Activated CD4-positive, alpha-beta memory T cell treated with anti-CD3 and anti-CD28 coated beads, Interleukin-2, amount 10 ng/mL, durations not matched to agents 7 days and 5 days (primary cell): ENCODE measurements at regions of chr14 and their contacts with region 1.

Region 1: DNA sequence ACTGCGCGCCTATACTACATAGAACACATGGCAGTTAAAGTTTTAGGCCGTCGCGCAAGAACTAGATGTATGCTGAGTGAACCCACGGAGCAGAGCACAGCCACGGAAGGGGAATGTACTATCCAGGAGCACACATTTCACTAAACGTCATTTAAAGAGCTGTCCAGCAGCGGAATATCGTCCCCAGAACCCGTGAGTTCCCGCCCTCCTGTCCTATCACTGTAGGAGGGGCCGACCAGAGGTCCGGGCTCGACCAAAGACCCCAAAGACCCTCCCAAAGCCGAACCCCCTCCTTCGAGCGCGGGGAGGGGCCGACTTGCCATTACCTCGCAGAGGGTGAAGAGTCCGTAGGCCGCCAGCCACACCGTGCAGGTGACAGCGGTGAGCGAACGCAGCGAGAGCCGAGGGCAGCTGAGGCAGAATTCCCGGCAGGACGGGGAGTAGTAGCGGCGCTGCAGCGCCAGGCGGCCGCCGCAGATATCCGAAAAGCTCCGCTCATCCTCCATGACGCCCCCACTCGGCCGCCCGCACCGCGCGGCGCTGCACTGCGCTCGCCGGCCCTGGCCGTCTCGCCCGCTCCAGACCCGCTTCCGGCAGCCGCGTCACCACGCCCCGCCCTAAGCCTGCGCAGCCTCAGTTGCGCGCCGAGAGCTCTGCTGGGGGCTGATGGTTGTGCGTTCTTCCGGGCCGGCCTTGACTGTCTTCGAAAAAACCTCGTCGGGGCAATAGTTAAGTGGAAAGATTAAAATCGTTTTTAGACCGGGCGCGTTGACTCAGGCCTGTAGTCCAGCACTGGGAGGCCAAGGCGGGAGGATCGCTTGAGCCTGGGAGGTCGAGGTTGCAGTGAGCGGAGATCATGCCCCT is at the start of gene PIGH:
- DNase-seq: peak; percentile 95
- H3K4me3 Mint-ChIP-seq: peak within 1 kb of the TSS; percentile 94
- H3K27ac Mint-ChIP-seq: peak within 1 kb of the TSS; percentile 80
- H3K4me1 Mint-ChIP-seq: peaks cover 33% of the 10 kb centered on the region
- H3K27me3 Mint-ChIP-seq: peaks cover 2% of the 10 kb centered on the region
- total RNA-seq, gene PIGH: 15.7 to 16.4 TPM

Region 2: GRCh38 chr14:67359775-67360648 is 239.9 kb before region 1 on chr14 and contains the starts of genes ATP6V1D and EIF2S1:
- CTCF ChIA-PET with region 1: interaction called, 8 read pairs
- POLR2A ChIA-PET with region 1: interaction called, 10 read pairs
- DNase-seq: peak; percentile 100
- H3K4me3 Mint-ChIP-seq: peak within 1 kb of the TSS; percentile 99
- H3K27ac Mint-ChIP-seq: peak within 1 kb of the TSS; percentile 97
- H3K4me1 Mint-ChIP-seq: peaks cover 65% of the 10 kb centered on the region
- H3K27me3 Mint-ChIP-seq: no peaks in the 10 kb centered on the region
- total RNA-seq, gene ATP6V1D: 46.7 to 48.2 TPM
- total RNA-seq, gene EIF2S1: 120 to 129 TPM

Region 3: GRCh38 chr14:67551940-67552339 is 48.0 kb before region 1 on chr14:
- CTCF ChIA-PET with region 1: no interaction called
- POLR2A ChIA-PET with region 1: no interaction called
- DNase-seq: no peak
- H3K4me3 Mint-ChIP-seq: no peak overlapping the region
- H3K27ac Mint-ChIP-seq: no peak overlapping the region
- H3K4me1 Mint-ChIP-seq: no peaks in the 10 kb centered on the region
- H3K27me3 Mint-ChIP-seq: peaks cover 7% of the 10 kb centered on the region

Region 4: DNA sequence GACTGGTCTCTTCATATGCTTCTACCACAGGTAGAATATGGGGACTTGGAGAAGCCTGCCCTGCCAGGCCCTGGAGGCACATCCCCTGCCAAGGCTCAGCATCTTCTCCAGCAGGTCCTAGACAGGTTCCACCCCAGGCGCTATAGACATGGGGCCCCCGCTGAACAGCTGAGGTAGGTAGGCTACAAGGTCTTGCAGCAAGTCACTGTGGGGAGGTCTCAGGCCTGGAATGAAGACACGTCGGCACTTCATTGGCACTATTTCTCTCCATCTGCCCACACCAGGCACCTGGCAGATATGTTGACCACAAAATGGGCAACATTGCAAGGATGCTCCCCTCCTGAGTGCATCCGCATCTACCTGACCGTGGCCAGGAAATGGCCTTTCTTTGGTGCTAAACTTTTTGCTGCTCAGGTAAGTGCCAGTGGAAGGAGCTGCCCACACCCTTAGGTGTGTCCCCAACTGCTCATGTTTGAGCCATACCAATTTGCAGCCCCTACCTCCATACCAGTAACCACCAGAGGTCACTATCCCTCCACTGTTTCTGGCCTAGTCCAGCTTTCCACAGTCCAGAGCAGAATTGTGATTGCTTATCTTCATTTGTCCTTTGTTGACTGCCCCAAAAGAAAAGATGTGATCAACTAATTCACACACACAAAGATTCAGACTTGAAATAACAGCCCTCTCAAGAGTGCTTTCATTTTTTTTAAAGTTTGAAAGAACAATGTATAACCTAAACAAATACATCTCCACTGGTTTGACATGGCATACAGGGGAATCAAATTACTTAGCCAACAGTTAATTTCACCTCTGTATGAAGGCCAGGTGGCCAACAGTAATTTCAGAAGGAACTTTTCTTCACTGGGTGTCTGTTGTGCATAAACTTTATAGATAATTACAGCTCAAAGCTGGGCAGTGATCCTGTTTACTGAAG is 16.0 kb before region 1 on chr14:
- CTCF ChIA-PET with region 1: interaction called, 22 read pairs
- POLR2A ChIA-PET with region 1: interaction called, 3 read pairs
- DNase-seq: peak; percentile 26
- H3K4me3 Mint-ChIP-seq: no peak overlapping the region
- H3K27ac Mint-ChIP-seq: no peak overlapping the region
- H3K4me1 Mint-ChIP-seq: peaks cover 12% of the 10 kb centered on the region
- H3K27me3 Mint-ChIP-seq: no peaks in the 10 kb centered on the region

Region 5: GRCh38 chr14:67610491-67610890 is 10.6 kb after region 1 on chr14:
- CTCF ChIA-PET with region 1: interaction called, 20 read pairs
- POLR2A ChIA-PET with region 1: interaction called, 14 read pairs
- DNase-seq: no peak
- H3K4me3 Mint-ChIP-seq: no peak overlapping the region
- H3K27ac Mint-ChIP-seq: no peak overlapping the region
- H3K4me1 Mint-ChIP-seq: peaks cover 3% of the 10 kb centered on the region
- H3K27me3 Mint-ChIP-seq: peaks cover 10% of the 10 kb centered on the region

Region 6: DNA sequence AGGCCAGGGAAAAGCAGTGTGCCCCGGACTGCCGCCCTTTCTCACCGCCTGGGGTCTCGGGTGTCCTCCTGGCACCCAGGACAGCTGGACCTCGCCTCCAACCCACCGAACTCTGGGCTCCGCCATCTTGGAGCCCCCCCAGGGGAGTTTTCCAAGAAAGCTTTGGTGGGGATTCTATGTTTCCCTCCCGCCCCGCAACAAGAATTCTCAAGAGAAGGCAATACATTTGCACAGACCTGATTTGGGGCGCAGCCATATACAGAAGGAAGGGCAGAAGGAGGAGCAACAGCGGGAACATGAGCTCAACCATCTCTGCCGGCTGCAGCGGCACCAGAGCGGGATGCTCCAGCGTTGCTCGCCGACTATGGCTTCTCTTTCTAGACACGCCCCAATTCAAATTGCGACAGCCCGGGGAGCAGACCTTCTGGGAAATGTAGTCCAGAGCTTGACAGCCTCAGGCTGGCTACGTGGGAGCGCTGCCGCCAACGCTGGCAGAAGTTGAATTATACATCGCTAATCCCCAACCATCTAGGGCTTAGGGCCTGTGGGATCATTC is 95.5 kb after region 1 on chr14 and contains the start of gene RDH11:
- CTCF ChIA-PET with region 1: interaction called, 9 read pairs
- POLR2A ChIA-PET with region 1: interaction called, 17 read pairs
- DNase-seq: peak; percentile 88
- H3K4me3 Mint-ChIP-seq: peak within 1 kb of the TSS; percentile 89
- H3K27ac Mint-ChIP-seq: peak within 1 kb of the TSS; percentile 89
- H3K4me1 Mint-ChIP-seq: peaks cover 30% of the 10 kb centered on the region
- H3K27me3 Mint-ChIP-seq: no peaks in the 10 kb centered on the region
- total RNA-seq, gene RDH11: 56.6 to 60.4 TPM

Region 7: GRCh38 chr14:68676511-68676943 is 1076.6 kb after region 1 on chr14:
- CTCF ChIA-PET with region 1: no interaction called
- POLR2A ChIA-PET with region 1: no interaction called
- DNase-seq: no peak
- H3K4me3 Mint-ChIP-seq: no peak overlapping the region
- H3K27ac Mint-ChIP-seq: no peak overlapping the region
- H3K4me1 Mint-ChIP-seq: peaks cover 11% of the 10 kb centered on the region
- H3K27me3 Mint-ChIP-seq: no peaks in the 10 kb centered on the region